ENCODE measurements at regions of chr20 and their contacts with region 1.

Region 1: GRCh38 chr20:15967334-15967733 is 605.9 kb downstream of the KIF16B start:
- DNase-seq: no peak
- H3K4me3 Mint-ChIP-seq: no peak overlapping the region
- H3K27ac Mint-ChIP-seq: no peak overlapping the region
- H3K4me1 Mint-ChIP-seq: no peaks in the 10 kb centered on the region
- H3K27me3 Mint-ChIP-seq: no peaks in the 10 kb centered on the region

Region 2: DNA sequence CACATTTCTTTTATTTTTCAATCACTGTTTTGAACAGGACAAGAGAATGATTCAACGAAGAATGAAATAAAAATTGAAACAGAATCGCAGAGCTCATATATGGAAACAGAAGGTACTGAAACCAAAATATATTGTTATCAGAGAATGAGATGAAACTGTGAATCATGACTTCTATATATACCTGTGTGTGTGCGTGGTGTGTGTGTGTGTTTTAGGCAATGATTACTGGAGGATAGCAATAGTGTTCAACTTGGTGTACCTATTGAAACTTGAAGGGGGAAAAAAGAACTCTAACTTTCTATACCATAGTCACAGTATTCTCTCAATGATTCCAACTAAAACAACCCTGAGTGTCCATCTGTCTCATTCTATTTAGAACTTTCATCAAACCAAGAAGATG is 19.4 kb after region 1 on chr20:
- intact Hi-C with region 1: loop called (anchors 2 kb)
- DNase-seq: no peak
- H3K4me3 Mint-ChIP-seq: no peak overlapping the region
- H3K27ac Mint-ChIP-seq: no peak overlapping the region
- H3K4me1 Mint-ChIP-seq: no peaks in the 10 kb centered on the region
- H3K27me3 Mint-ChIP-seq: no peaks in the 10 kb centered on the region

Region 3: GRCh38 chr20:16209951-16210361 is 242.6 kb after region 1 on chr20:
- intact Hi-C with region 1: no loop called
- DNase-seq: no peak
- H3K4me3 Mint-ChIP-seq: no peak overlapping the region
- H3K27ac Mint-ChIP-seq: no peak overlapping the region
- H3K4me1 Mint-ChIP-seq: no peaks in the 10 kb centered on the region
- H3K27me3 Mint-ChIP-seq: no peaks in the 10 kb centered on the region

Measured in activated T-helper 2 cell treated with anti-CD3 and anti-CD28 coated beads, Interferon-gamma antibody, Interleukin-2, Interleukin-4, amounts not matched to agents 10 μg/mL and 5 μg/mL and 100 μg/mL, durations not matched to agents 14 hours and 24 hours and 36 hours (primary cell).